SK-N-SH (cell line): ENCODE measurements at regions of chr10 and their contacts with region 1.

Region 1: DNA sequence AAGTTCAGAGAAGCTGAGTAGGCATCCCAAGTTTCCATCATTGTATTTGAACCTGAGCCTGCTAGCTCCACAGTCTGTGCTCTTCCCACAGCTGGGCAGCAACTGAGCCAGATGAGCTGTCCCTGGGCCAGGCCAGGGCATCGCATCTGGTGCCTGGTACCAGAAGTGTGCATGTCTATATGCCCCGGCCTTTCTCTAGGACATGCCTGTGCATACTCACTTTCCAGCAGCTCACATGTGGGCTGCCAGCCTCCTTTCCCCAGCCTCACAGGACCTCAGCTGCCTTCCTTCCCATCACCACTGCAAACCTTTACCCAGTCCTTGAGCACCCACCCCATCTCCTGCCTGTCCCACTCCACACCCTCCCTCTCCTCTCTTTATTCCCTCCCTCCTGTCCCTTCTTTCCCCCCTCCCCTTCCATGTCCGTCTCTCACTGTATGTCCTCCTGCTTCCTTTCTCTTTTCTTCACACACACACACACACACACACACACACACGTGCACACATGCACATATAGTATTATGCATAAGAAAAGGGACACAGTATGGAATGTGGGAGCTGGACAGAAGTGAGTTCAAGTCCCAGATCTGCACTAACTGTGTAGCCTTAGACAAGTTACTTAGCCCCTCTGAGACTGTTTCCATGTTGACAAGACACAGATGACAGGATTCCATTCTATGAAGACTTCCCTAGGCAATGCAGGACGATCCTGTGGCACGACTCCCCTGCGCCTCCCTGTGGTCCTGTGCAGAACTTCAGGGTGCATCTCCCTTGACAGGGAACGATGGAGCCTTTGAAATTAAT is 10.9 kb downstream of the CDHR1 start:
- DNase-seq: peak; percentile 83
- H3K4me3 ChIP-seq: peak overlapping the region in 1 of 2 experiments; percentile 17; a peak in 1 of 4 replicates
- H3K27ac ChIP-seq: no peak overlapping the region
- H3K4me1 ChIP-seq: no peaks in the 10 kb centered on the region
- H3K27me3 ChIP-seq: no peaks in the 10 kb centered on the region
- CTCF ChIP-seq: peak; percentile 69
- EP300 ChIP-seq: no peak
- RAD21 ChIP-seq: peak; percentile 83

Region 2: GRCh38 chr10:84194424-84195040 is 10.7 kb before region 1 on chr10 and contains the start of gene CDHR1:
- CTCF ChIA-PET with region 1: interaction called, 34 read pairs
- POLR2A ChIA-PET with region 1: no interaction called
- DNase-seq: peak; percentile 86
- H3K4me3 ChIP-seq: peak within 1 kb of the TSS; percentile 42 to 47
- H3K27ac ChIP-seq: no peak within 1 kb of the TSS
- H3K4me1 ChIP-seq: peaks cover 0 to 11% of the 10 kb centered on the region in 2 experiments; a peak in 1 of 4 replicates
- H3K27me3 ChIP-seq: no peaks in the 10 kb centered on the region
- CTCF ChIP-seq: no peak
- EP300 ChIP-seq: no peak
- RAD21 ChIP-seq: no peak
- polyA plus RNA-seq, gene CDHR1: 0.02 and 0.05 TPM in 2 replicates

Region 3: GRCh38 chr10:84574102-84574501 is 368.9 kb after region 1 on chr10:
- CTCF ChIA-PET with region 1: no interaction called
- POLR2A ChIA-PET with region 1: no interaction called
- DNase-seq: no peak
- H3K4me3 ChIP-seq: no peak overlapping the region
- H3K27ac ChIP-seq: no peak overlapping the region
- H3K4me1 ChIP-seq: no peaks in the 10 kb centered on the region
- H3K27me3 ChIP-seq: no peaks in the 10 kb centered on the region
- CTCF ChIP-seq: 0 out of 2 replicates have a peak, but pooled peaks have one; percentile 18
- EP300 ChIP-seq: no peak
- RAD21 ChIP-seq: no peak